ENCODE measurements at regions of chr11 and their contacts with region 1.

Region 1: GRCh38 chr11:33257897-33258630 is 883 bp downstream of the HIPK3 start:
- DNase-seq: peak; percentile 91
- ATAC-seq: peak; percentile 87 to 92

Region 2: GRCh38 chr11:32706949-32707736 is 550.9 kb before region 1 on chr11:
- intact Hi-C with region 1: no loop called
- DNase-seq: no peak
- ATAC-seq: peak in 1 of 2 donors; percentile 76

Region 3: GRCh38 chr11:33161120-33162005 is 96.7 kb before region 1 on chr11 and contains the start of gene CSTF3:
- intact Hi-C with region 1: loop called (anchors 5 to 10 kb)
- DNase-seq: peak; percentile 100
- ATAC-seq: peak; percentile 99 to 100
- total RNA-seq, gene CSTF3: 14.0 to 15.8 TPM

Region 4: GRCh38 chr11:33168709-33169200 is 89.3 kb before region 1 on chr11:
- intact Hi-C with region 1: loop called (anchors 5 to 10 kb)
- DNase-seq: no peak
- ATAC-seq: peak in 1 of 2 donors; percentile 34

Region 5: GRCh38 chr11:33291004-33291777 is 33.1 kb after region 1 on chr11:
- intact Hi-C with region 1: no loop called
- DNase-seq: no peak
- ATAC-seq: peak; percentile 91 to 97

Region 6: DNA sequence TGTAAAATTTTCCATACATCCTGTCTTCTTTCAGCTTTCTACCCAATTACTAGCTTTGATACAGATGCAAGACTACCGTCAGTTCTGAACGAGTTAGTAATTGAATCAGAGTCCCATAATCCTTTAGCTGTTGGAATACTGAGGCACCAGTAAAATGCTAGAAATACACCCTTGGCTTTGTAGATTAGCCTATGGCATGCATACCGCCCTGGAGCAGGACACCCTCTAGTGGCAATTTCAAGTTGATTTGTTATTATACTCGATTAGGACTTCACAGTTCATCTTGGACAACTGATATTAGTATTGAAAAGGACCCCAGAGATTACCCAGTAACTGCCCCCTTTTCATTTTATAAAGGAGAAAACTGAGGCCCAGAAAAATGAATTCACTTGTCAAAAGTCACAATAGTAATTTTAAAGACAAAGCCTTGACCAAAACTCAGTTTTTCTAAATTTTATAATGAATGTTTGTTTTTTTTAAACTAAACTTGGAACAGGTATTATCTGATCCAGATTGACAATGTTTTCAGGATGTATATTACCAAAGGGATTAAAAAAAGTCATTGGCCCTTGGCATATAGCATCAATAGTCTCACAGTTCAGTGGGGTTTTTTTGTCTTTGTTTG is 71.8 kb after region 1 on chr11:
- intact Hi-C with region 1: loop called (anchors 2 to 5 kb)
- DNase-seq: no peak
- ATAC-seq: peak; percentile 64 to 67

Region 7: GRCh38 chr11:33344611-33345010 is 86.5 kb after region 1 on chr11:
- intact Hi-C with region 1: loop called in 1 of 2 experiments (anchors 5 kb)
- DNase-seq: no peak
- ATAC-seq: peak; percentile 38 to 55

Region 8: DNA sequence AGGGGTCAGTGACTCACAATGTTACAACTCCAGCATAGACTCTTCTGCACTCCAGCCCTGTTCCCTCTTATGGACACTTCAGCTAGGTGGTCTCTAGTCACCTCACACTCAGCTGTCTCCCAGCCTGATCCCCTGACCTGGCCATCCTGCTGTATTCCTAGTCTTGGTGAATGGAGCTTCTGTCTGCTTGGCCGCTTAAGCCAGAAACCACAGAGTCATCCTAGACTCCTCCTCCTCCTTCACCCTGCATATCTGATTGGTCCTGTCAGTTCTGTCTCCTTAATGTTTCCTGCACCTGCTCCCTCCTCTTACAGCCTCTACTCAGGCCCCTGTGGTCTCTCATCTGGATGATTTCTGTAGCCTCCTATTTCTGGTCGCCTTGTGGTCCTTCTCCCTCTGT is 144.0 kb after region 1 on chr11:
- intact Hi-C with region 1: no loop called
- DNase-seq: no peak
- ATAC-seq: no peak

Region 9: GRCh38 chr11:33515347-33515746 is 257.3 kb after region 1 on chr11:
- intact Hi-C with region 1: no loop called
- DNase-seq: no peak
- ATAC-seq: no peak

Measured in left cardiac atrium (tissue), 4 donors.